HepG2 (cell line): ENCODE measurements at regions of chr6 and their contacts with region 1.

Region 1: DNA sequence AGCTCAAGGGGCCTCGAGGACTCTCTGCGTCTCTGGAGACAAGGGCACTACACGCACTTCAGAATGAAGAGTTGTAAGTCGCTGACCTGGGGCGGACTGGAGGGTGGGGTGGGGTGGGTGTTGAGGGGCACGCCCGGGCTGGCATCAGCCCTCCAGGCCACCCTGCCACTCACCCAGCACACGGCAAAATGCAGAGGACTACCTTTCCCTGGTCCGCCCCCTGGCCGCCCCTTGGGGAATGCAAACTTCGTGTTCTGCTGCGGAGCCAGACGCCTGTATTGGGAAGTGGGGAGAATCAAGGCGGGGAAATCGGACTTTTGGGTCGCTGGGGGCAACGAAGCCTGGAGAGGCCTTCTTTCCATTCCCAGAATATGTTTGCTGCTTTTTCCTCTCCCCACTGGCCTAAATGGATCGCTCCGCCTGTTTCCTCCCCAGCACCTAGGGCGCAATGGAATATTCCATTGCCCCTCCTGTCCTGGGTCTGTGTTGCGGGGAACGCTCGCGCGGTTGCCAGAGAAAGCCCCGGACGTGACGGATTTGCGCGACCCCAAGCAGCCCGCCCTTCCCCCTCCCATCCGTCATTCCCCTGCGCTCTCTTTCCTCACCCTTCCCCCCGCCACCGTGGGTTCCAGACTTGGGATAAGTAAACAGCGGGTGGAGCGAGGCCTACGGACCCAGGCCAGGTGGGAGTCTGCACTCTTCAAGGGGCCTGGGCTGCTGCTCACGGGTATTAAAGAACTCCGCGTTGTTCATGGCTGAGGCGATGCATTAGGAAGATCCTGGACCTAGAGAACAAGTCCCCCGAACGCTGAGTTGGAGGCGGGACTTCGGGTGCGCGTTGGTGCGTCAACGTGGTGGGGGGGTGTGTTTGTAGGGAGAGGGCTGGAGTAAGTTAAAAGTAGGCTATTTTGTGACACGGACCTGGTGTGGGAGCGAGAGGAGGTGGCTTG is at the start of gene PPT2:
- DNase-seq: peak; percentile 93
- ATAC-seq: peak; percentile 79
- H3K4me3 ChIP-seq: peak within 1 kb of the TSS; percentile 78 to 91 (median 88)
- H3K27ac ChIP-seq: peak within 1 kb of the TSS; percentile 88
- H3K4me1 ChIP-seq: peaks cover 28% of the 10 kb centered on the region
- H3K27me3 ChIP-seq: no peaks in the 10 kb centered on the region; a peak in 1 of 5 replicates
- CTCF ChIP-seq: peak; percentile 50
- EP300 ChIP-seq: peak; percentile 71 to 82
- POLR2A ChIP-seq: peak; percentile 68 to 74
- RAD21 ChIP-seq: peak; percentile 37
- total RNA-seq, gene PPT2: 20.1 and 39.2 TPM in 2 replicates

Region 2: DNA sequence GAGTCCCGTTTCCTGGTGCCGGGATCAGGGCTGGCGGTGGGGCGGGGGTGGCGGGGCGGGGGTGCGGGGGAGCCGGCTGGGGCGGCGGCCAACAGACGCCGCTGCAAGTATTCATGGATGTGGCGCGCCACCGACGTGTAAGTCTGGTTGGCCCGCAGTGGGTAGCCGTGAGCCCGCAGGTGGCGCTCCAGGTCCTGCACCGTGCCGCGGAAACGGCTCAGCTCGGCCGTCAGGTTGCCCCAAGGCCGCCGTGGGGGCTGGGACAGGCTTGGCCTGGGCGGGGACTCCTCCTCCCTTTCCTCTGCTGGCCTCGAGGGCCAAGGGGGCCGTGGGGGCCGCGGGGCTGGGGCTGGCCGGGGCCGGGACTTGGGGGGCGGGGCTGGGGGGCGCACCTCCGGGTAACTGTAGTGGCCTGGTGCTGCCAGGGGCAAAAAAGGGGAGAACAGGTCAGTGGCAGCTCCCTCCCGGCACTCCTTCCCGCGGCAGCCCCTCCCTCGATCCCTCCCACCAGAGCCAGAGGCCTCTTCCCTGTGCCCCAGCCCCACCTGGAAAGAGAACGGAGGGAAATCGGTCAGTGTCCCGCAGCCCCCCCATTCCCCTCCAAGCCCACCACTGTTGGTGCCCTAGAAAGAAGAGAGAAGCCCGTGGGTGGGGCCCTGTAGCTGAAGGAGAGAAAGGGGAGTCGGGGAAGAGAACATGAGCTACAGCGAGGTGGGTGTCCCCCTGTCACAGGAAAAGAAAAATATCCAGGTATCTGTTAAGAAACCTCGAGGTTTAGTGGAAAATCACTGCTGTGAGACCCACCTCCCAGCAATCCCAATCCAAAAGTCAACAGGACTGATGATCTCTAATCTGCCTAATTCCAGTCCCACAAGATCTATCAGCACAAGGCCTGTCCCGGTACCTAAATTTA is 66.0 kb before region 1 on chr6:
- CTCF ChIA-PET with region 1: interaction called, 5 read pairs
- POLR2A ChIA-PET with region 1: no interaction called
- in situ Hi-C with region 1: no loop called
- intact Hi-C with region 1: loop called (anchors 1 kb)
- DNase-seq: peak; percentile 82
- ATAC-seq: peak; percentile 93
- H3K4me3 ChIP-seq: peak overlapping the region; percentile 37 to 62 (median 45); a peak in 4 of 6 replicates
- H3K27ac ChIP-seq: no peak overlapping the region
- H3K4me1 ChIP-seq: peaks cover 41% of the 10 kb centered on the region
- H3K27me3 ChIP-seq: peaks cover 4 to 31% of the 10 kb centered on the region in 2 experiments
- CTCF ChIP-seq: peak; percentile 93
- EP300 ChIP-seq: no peak
- POLR2A ChIP-seq: no peak
- RAD21 ChIP-seq: peak; percentile 96

Region 3: DNA sequence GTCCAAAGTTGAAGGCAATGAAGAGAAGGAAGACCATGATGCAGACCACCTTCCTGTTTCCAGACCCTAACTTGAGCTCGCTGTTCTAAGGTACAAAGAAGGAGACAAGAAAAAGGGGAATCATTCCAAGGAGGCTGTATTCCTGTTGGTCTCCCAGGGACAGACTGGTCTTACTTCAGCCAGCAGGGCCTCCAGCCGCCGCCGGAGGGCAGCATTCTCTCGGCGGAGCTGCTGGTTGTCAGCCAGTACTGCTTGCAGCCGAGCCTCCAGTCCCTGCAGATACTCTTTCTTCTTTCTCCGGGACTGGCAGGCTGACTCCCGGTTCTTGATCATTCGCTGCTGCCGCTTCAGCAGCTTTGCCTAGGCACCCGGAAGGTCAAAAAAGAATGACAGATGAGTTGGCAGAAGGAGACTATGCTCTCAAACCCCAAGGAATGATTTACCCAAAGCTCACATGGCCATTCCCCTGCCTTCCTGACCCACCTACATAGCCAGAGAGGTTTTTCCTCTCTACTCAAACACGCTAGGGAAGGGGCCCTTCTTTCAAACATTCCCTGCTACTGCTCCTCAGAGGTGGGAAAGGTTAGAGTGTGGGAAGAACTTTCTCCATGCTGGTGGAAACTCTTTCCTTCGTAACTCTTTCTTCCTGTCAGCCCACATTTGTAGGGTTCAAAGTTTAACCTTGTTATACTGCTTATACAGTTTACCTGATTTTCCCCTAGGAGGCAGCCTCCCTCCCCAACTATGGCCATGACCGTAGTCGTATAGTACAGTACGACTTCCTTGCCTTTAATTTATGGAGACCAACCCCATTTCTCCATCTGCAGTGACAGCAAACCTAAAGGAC is 34.8 kb before region 1 on chr6:
- CTCF ChIA-PET with region 1: interaction called, 97 read pairs
- POLR2A ChIA-PET with region 1: interaction called, 3 read pairs
- in situ Hi-C with region 1: loop called (anchors 5 kb)
- intact Hi-C with region 1: loop called (anchors 1 kb)
- DNase-seq: peak; percentile 84
- ATAC-seq: peak; percentile 93
- H3K4me3 ChIP-seq: peak overlapping the region; percentile 45 to 59 (median 56); a peak in 5 of 6 replicates
- H3K27ac ChIP-seq: peak overlapping the region; percentile 87
- H3K4me1 ChIP-seq: peaks cover 24% of the 10 kb centered on the region
- H3K27me3 ChIP-seq: no peaks in the 10 kb centered on the region
- CTCF ChIP-seq: peak; percentile 95
- EP300 ChIP-seq: no peak
- POLR2A ChIP-seq: peak in 1 of 2 experiments; percentile 63; a peak in 3 of 4 replicates
- RAD21 ChIP-seq: peak; percentile 97

Region 4: DNA sequence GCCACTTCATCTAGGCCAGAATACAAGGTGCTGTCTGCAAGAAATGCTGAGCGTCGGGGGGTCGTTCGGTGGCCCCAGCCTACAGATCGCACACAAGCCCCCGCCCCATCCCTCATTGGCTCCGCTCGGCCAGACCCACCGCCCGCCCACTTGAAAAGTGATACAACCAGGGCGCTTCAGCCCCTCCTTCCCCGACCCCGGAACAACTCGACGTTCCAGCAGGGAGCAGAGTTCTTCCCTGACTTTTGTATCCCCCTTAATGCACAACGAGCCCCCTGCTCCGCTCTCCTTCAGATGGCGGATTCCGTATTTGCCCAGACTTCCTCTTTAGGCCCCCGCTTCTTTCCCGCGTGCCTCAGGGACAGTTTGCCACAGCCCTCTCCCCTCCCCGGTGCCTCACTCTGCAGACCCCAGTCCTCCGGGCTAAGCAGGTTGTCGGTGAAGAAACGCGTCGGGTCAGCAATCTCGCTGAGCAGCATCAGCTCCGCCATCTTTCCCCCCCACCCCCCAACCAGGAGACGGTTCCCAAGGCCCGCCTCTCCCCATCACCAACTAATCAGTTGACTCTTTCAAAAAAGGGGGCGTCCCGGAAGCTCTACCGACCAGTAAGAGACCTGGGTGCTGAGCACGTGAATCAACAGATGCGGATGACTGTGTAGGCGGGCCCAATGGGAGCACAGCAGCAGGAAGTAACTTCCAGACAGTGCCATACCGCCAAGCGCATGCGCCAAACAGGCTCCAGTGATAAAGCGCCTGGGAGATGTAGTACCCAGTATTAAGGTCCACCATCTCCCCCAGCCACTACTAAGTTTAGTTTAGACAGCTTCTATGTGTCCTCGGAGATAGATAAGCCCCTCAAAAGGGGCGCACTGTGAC is 25.9 kb before region 1 on chr6 and contains the start of gene ATF6B:
- CTCF ChIA-PET with region 1: interaction called, 4 read pairs
- POLR2A ChIA-PET with region 1: interaction called, 35 read pairs
- in situ Hi-C with region 1: no loop called
- intact Hi-C with region 1: loop called (anchors 1 kb)
- DNase-seq: peak; percentile 100
- ATAC-seq: peak; percentile 93
- H3K4me3 ChIP-seq: peak within 1 kb of the TSS; percentile 95 to 100 (median 99)
- H3K27ac ChIP-seq: peak within 1 kb of the TSS; percentile 81
- H3K4me1 ChIP-seq: peaks cover 33% of the 10 kb centered on the region
- H3K27me3 ChIP-seq: no peaks in the 10 kb centered on the region; a peak in 2 of 5 replicates
- CTCF ChIP-seq: 0 out of 2 replicates have a peak, but pooled peaks have one; percentile 17
- EP300 ChIP-seq: no peak
- POLR2A ChIP-seq: peak; percentile 68 to 69
- RAD21 ChIP-seq: no peak
- total RNA-seq, gene ATF6B: 7.5 and 18.1 TPM in 2 replicates

Region 5: GRCh38 chr6:32177788-32178546 is 24.1 kb after region 1 on chr6 and contains the start of gene RNF5:
- CTCF ChIA-PET with region 1: no interaction called
- POLR2A ChIA-PET with region 1: interaction called, 14 read pairs
- in situ Hi-C with region 1: no loop called
- intact Hi-C with region 1: loop called (anchors 1 kb)
- DNase-seq: peak; percentile 100
- ATAC-seq: peak; percentile 90
- H3K4me3 ChIP-seq: peak within 1 kb of the TSS; percentile 96 to 98 (median 98)
- H3K27ac ChIP-seq: peak within 1 kb of the TSS; percentile 97
- H3K4me1 ChIP-seq: peaks cover 54% of the 10 kb centered on the region
- H3K27me3 ChIP-seq: no peaks in the 10 kb centered on the region; a peak in 1 of 5 replicates
- CTCF ChIP-seq: no peak
- EP300 ChIP-seq: peak; percentile 10 to 17; a peak in 1 of 4 replicates
- POLR2A ChIP-seq: peak; percentile 1 to 14; a peak in 1 of 4 replicates
- RAD21 ChIP-seq: no peak
- total RNA-seq, gene RNF5: 98.0 and 107 TPM in 2 replicates

Region 6: GRCh38 chr6:33299237-33299944 is 1145.6 kb after region 1 on chr6:
- CTCF ChIA-PET with region 1: no interaction called
- POLR2A ChIA-PET with region 1: no interaction called
- in situ Hi-C with region 1: no loop called
- intact Hi-C with region 1: no loop called
- DNase-seq: peak; percentile 88
- ATAC-seq: peak; percentile 73
- H3K4me3 ChIP-seq: peak overlapping the region; percentile 75 to 88 (median 79)
- H3K27ac ChIP-seq: peak overlapping the region; percentile 93
- H3K4me1 ChIP-seq: peaks cover 27% of the 10 kb centered on the region
- H3K27me3 ChIP-seq: no peaks in the 10 kb centered on the region; a peak in 1 of 5 replicates
- CTCF ChIP-seq: peak; percentile 98
- EP300 ChIP-seq: peak in 1 of 2 experiments; percentile 27; a peak in 1 of 4 replicates
- POLR2A ChIP-seq: peak; percentile 88 to 95
- RAD21 ChIP-seq: peak; percentile 74